Activated naive CD4-positive, alpha-beta T cell treated with anti-CD3 and anti-CD28 coated beads for 36 hours (primary cell): ENCODE measurements at regions of chr4 and their contacts with region 1.

Region 1: GRCh38 chr4:2811830-2812611 is 19.1 kb downstream of the SH3BP2 start:
- DNase-seq: peak; percentile 82
- H3K4me3 Mint-ChIP-seq: peak overlapping the region; percentile 93
- H3K27ac Mint-ChIP-seq: peak overlapping the region; percentile 96
- H3K4me1 Mint-ChIP-seq: peaks cover 48% of the 10 kb centered on the region
- H3K27me3 Mint-ChIP-seq: no peaks in the 10 kb centered on the region

Region 2: GRCh38 chr4:2515830-2516550 is 296.0 kb before region 1 on chr4:
- CTCF ChIA-PET with region 1: no interaction called
- intact Hi-C with region 1: no loop called
- DNase-seq: no peak
- H3K4me3 Mint-ChIP-seq: no peak overlapping the region
- H3K27ac Mint-ChIP-seq: no peak overlapping the region
- H3K4me1 Mint-ChIP-seq: no peaks in the 10 kb centered on the region
- H3K27me3 Mint-ChIP-seq: no peaks in the 10 kb centered on the region

Region 3: DNA sequence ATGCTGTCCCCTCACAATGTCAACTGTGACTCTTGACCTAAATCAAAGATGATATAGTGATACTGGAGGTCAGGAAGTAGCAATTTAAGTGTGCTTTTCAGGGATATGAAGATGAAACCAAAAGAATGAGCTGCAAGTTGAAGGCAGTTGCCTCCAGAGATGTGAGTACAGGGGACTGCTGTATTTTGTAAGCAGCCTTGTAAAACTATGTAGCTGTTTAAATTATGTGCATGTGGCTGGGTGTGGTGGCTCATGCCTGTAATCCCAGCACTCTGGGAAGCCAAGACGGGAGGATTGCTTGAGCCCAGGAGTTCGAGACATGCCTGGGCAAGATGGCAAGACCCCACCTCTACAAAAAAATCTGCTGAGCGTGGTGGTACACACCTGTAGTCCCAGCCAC is 40.8 kb before region 1 on chr4:
- CTCF ChIA-PET with region 1: no interaction called
- intact Hi-C with region 1: loop called (anchors 2 kb)
- DNase-seq: no peak
- H3K4me3 Mint-ChIP-seq: no peak overlapping the region
- H3K27ac Mint-ChIP-seq: no peak overlapping the region
- H3K4me1 Mint-ChIP-seq: peaks cover 25% of the 10 kb centered on the region
- H3K27me3 Mint-ChIP-seq: no peaks in the 10 kb centered on the region

Region 4: DNA sequence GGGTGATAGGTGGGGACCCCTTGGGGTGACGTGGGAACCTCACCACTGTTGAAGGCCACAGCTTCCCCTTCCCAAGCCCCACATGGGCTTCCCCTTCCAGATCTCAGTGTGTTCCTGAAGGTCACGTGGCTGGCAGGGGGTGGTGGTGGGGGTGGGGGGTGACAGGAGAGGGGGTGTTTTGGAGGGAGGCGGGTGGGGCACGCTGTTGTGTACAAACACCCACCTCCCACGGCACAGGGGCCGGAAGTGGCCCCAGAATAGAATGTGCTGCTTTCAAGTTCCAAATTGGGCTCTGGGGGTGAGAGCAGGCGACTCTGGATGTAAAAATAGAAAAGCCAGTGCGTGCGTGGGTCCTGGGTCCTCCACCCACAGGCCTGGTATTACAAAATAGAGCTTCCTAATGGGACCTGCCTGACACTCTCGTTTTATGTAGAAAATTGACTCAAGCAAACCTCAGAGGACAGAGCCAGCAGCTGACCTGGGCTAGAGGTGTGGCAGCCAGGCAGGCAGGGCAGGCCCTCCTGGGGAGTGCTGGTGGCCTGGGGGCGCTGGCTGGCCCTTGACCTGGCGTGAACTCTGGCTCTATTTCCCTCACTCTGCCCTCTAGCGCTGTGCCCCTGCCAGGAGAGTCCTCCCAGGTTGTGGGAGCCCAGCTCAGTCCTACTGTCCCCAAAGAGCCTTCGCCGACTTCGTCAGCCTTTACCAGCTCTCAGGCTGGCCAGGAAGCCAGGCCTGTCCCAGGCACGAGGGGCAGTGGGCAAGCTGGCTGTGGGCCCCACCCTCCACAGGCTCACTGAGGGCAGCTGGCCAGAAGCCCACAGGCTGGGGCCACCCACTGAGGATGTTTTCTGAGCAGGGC is 24.6 kb before region 1 on chr4:
- CTCF ChIA-PET with region 1: interaction called, 3 read pairs
- intact Hi-C with region 1: loop called (anchors 2 kb)
- DNase-seq: peak; percentile 73
- H3K4me3 Mint-ChIP-seq: no peak overlapping the region
- H3K27ac Mint-ChIP-seq: peak overlapping the region; percentile 96
- H3K4me1 Mint-ChIP-seq: peaks cover 52% of the 10 kb centered on the region
- H3K27me3 Mint-ChIP-seq: no peaks in the 10 kb centered on the region

Region 5: DNA sequence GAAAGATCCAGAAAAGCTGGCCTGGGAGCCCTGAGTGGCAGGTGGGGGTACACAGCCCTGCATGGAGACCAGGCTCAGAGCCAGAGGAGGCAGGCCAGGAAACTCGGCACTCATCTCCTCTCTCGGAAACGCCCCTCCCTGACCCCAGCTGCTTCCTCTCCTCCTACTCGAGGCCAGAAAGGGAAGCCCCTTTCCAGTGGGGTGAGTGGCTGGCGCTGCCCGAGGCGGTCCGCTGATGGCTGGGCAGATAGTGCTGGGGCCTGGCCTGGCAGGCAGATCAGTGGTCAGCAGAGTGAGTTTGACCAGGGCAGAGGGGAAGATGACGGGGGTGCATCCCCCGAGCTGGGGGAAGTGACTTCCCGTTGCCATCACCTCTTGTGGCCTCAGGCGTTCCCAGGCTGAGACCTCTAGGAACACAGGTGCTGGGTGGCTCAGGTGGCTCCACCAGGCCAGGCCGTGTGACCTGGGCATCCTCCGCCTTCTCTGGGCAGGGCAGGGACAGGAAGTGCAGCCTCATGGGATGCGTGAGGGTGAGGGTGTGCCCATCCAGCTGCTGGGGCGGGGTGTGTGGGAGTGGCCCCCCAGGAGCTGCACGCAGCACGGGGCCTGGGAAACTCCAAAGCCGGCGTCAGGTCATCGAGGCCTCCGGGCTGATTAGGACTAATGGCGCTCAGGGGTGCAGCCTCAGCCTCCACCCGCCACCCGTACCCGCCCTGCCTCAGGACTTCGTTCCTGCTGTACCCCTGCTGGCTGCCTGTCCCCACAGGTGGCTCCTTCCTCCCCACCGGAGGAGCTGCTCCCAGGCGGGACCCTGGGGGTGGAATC is 13.4 kb before region 1 on chr4:
- CTCF ChIA-PET with region 1: interaction called, 3 read pairs
- intact Hi-C with region 1: loop called (anchors 2 kb)
- DNase-seq: peak; percentile 79
- H3K4me3 Mint-ChIP-seq: peak overlapping the region; percentile 45
- H3K27ac Mint-ChIP-seq: peak overlapping the region; percentile 76
- H3K4me1 Mint-ChIP-seq: peaks cover 55% of the 10 kb centered on the region
- H3K27me3 Mint-ChIP-seq: no peaks in the 10 kb centered on the region

Region 6: DNA sequence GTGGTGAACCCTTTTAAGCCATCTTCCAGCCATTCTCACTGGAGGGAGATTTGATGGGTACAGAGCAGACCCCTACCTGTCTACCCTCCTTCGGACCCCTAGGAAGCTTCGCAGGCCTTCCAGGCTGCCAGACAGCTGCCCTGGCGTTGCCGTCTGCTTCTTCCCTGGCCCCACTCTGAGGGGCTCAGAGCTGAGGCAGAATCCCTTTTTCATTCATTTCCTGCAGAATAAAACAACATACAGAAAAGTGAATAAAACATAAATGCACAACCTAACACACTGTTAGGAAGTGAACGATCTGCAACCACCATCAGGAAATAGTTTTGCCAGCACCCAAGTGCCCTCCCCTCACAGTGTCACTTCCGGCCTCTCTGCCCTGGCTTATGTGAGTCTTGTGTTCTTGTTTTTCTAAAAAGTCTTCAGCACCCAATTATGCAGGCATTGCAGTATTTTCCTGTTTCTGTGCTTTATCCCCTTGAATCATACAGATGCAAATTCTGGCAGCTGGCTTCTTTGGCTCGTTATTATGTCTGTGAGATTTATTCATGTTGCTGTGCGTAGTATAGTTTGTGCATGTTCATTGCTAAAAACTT is 26.0 kb after region 1 on chr4:
- CTCF ChIA-PET with region 1: interaction called, 3 read pairs
- intact Hi-C with region 1: loop called (anchors 1 kb)
- DNase-seq: peak; percentile 88
- H3K4me3 Mint-ChIP-seq: peak overlapping the region; percentile 75
- H3K27ac Mint-ChIP-seq: peak overlapping the region; percentile 93
- H3K4me1 Mint-ChIP-seq: peaks cover 59% of the 10 kb centered on the region
- H3K27me3 Mint-ChIP-seq: no peaks in the 10 kb centered on the region

Region 7: GRCh38 chr4:2843263-2843940 is 31.4 kb after region 1 on chr4 and contains the start of gene ADD1:
- CTCF ChIA-PET with region 1: interaction called, 3 read pairs
- intact Hi-C with region 1: loop called (anchors 1 kb)
- DNase-seq: peak; percentile 92
- H3K4me3 Mint-ChIP-seq: peak within 1 kb of the TSS; percentile 83
- H3K27ac Mint-ChIP-seq: peak within 1 kb of the TSS; percentile 91
- H3K4me1 Mint-ChIP-seq: peaks cover 58% of the 10 kb centered on the region
- H3K27me3 Mint-ChIP-seq: no peaks in the 10 kb centered on the region
- total RNA-seq, gene ADD1: 165 TPM

Region 8: GRCh38 chr4:2858451-2859217 is 46.6 kb after region 1 on chr4:
- CTCF ChIA-PET with region 1: no interaction called
- intact Hi-C with region 1: loop called (anchors 1 kb)
- DNase-seq: no peak
- H3K4me3 Mint-ChIP-seq: no peak overlapping the region
- H3K27ac Mint-ChIP-seq: no peak overlapping the region
- H3K4me1 Mint-ChIP-seq: peaks cover 73% of the 10 kb centered on the region
- H3K27me3 Mint-ChIP-seq: no peaks in the 10 kb centered on the region

Region 9: DNA sequence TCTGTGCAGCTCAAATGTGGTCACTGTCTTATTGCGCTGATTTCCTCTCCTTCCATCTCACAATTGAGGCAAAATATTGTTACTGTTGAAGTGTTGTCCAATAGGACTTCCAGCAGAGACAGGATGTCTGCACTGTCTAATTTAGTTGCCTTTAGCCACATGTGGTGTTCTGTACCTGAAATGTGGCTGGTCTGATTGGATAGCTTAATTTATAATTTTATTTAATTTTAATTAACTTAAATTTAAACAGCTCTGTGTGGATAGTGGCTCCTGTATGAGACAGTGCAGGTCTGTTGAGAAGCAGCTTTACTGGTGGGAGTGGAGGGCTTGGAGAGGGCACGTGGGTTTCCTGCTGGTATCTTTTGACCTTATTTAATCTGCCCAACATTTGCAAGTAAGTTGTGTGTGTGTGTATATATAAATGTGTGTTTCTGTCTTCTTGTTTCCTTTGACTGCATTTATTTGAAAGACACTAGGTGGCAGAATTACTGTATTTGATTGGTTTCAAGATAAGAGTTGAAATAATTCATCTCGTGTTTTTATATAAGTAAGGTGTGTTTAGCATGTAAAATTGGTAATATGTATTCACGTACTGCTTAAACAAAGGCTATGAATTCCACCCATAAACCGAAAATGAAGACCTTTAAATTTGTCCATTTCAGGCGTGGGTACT is 381.6 kb after region 1 on chr4:
- CTCF ChIA-PET with region 1: no interaction called
- intact Hi-C with region 1: no loop called
- DNase-seq: no peak
- H3K4me3 Mint-ChIP-seq: no peak overlapping the region
- H3K27ac Mint-ChIP-seq: no peak overlapping the region
- H3K4me1 Mint-ChIP-seq: peaks cover 49% of the 10 kb centered on the region
- H3K27me3 Mint-ChIP-seq: no peaks in the 10 kb centered on the region